Adrenal gland (tissue), 19 donors: ENCODE measurements at regions of chr13 and their contacts with region 1.

Region 1: GRCh38 chr13:46553886-46554858 is 1.2 kb downstream of the LRCH1 start:
- DNase-seq: peak; percentile 63 to 79 (median 68)
- H3K4me3 ChIP-seq: peak overlapping the region; percentile 63 to 93 (median 86)
- H3K27ac ChIP-seq: peak overlapping the region; percentile 51 to 90 (median 80)
- H3K4me1 ChIP-seq: peaks cover 11 to 26% of the 10 kb centered on the region in 2 donors
- H3K27me3 ChIP-seq: no peaks in the 10 kb centered on the region
- CTCF ChIP-seq: peak in 5 of 6 experiments; percentile 16 to 40 (median 24)
- POLR2A ChIP-seq: peak in 1 of 2 donors; percentile 40

Region 2: GRCh38 chr13:46603165-46603603 is 49.0 kb after region 1 on chr13:
- intact Hi-C with region 1: loop called in 1 of 2 experiments (anchors 10 kb)
- DNase-seq: no peak
- H3K4me3 ChIP-seq: no peak overlapping the region
- H3K27ac ChIP-seq: no peak overlapping the region
- H3K4me1 ChIP-seq: peaks cover 4 to 50% of the 10 kb centered on the region in 2 donors
- H3K27me3 ChIP-seq: no peaks in the 10 kb centered on the region
- CTCF ChIP-seq: peak in 3 of 6 experiments; percentile 3 to 20 (median 19)
- POLR2A ChIP-seq: no peak

Region 3: GRCh38 chr13:46721054-46721453 is 166.9 kb after region 1 on chr13:
- intact Hi-C with region 1: loop called (anchors 5 kb)
- DNase-seq: peak in 6 of 7 donors; percentile 34 to 71 (median 52)
- H3K4me3 ChIP-seq: no peak overlapping the region
- H3K27ac ChIP-seq: no peak overlapping the region
- H3K4me1 ChIP-seq: peaks cover 0 to 7% of the 10 kb centered on the region in 2 donors
- H3K27me3 ChIP-seq: no peaks in the 10 kb centered on the region
- CTCF ChIP-seq: peak; percentile 40 to 89 (median 76)
- POLR2A ChIP-seq: no peak